ENCODE measurements at regions of chr10 and their contacts with region 1.

Region 1: GRCh38 chr10:90871766-90872647 is at the start of gene RPP30:
- DNase-seq: peak; percentile 71 to 83 (median 77)
- ATAC-seq: peak; percentile 99
- H3K4me3 ChIP-seq: peak within 1 kb of the TSS; percentile 83
- H3K4me3 Mint-ChIP-seq: peak within 1 kb of the TSS; percentile 94 to 99 (median 98)
- H3K27ac ChIP-seq: peak within 1 kb of the TSS; percentile 71
- H3K27ac Mint-ChIP-seq: peak within 1 kb of the TSS; percentile 73 to 95 (median 88)
- H3K4me1 ChIP-seq: peaks cover 14 to 23% of the 10 kb centered on the region in 2 donors
- H3K4me1 Mint-ChIP-seq: peaks cover 24 to 53% (median 37%) of the 10 kb centered on the region in 7 donors
- H3K27me3 ChIP-seq: no peaks in the 10 kb centered on the region
- H3K27me3 Mint-ChIP-seq: peaks cover 22 to 40% (median 34%) of the 10 kb centered on the region in 5 donors
- total RNA-seq, gene RPP30: 24.1 to 45.6 (median 38.0) TPM

Region 2: DNA sequence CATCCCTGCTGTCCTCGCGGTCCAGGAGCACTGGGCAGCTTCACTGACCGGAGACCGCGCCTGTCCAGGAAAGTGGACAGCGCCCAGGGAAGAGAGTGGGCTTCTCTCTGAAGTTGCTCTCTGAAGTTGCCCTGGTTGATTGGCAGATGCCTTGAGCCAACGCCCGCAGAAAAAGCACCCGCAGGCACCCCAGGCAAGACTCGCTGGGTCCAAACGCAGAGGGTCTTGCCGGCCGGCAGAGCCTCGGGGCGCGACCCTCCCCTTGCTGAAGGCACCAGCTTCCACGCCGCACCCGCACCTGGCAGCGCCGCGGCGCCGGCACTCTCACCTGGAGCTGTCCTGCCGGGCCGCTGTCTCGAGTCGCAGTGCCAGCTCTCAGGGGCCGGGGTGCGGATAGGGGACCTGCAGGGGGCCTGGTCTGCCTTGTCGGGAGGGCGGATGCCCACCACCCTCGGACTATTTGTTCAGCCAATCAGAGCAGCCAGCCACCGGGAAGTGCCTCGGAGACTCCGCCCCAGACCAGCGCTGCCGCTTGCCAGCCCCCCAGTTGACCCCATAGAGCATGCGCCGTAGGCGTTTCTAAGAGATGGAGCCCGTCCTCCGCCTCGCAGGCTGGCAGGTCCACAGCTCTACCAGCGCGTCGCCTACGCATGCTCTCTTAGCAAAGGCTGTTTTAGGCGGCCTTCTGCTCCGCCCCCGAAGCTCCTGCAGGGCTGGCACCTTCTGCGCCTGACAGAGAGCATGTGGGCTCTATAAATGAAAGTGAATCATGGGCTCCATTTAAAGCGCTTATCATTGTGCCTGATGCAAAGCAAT is 1620.4 kb before region 1 on chr10 and contains the start of gene LIPA:
- CTCF ChIA-PET with region 1: no interaction called
- POLR2A ChIA-PET with region 1: interaction called, 3 read pairs
- intact Hi-C with region 1: loop called in 1 of 2 experiments (anchors 10 kb)
- DNase-seq: peak; percentile 78 to 97 (median 94)
- ATAC-seq: peak; percentile 97
- H3K4me3 ChIP-seq: peak within 1 kb of the TSS; percentile 80
- H3K4me3 Mint-ChIP-seq: peak within 1 kb of the TSS; percentile 82 to 91 (median 90)
- H3K27ac ChIP-seq: peak within 1 kb of the TSS; percentile 76
- H3K27ac Mint-ChIP-seq: peak within 1 kb of the TSS; percentile 38 to 90 (median 84)
- H3K4me1 ChIP-seq: peaks cover 8 to 9% of the 10 kb centered on the region in 2 donors
- H3K4me1 Mint-ChIP-seq: peaks cover 17 to 32% (median 22%) of the 10 kb centered on the region in 7 donors
- H3K27me3 ChIP-seq: no peaks in the 10 kb centered on the region
- H3K27me3 Mint-ChIP-seq: peaks cover 0 to 9% (median 0%) of the 10 kb centered on the region in 5 donors
- total RNA-seq, gene LIPA: 19.9 to 49.9 (median 48.3) TPM

Region 3: GRCh38 chr10:89793649-89794254 is 1078.3 kb before region 1 on chr10:
- CTCF ChIA-PET with region 1: no interaction called
- POLR2A ChIA-PET with region 1: no interaction called
- intact Hi-C with region 1: loop called (anchors 2 kb)
- DNase-seq: peak in 7 of 9 donors; percentile 19 to 58 (median 42)
- ATAC-seq: peak; percentile 76
- H3K4me3 ChIP-seq: no peak overlapping the region
- H3K4me3 Mint-ChIP-seq: no peak overlapping the region
- H3K27ac ChIP-seq: no peak overlapping the region
- H3K27ac Mint-ChIP-seq: no peak overlapping the region
- H3K4me1 ChIP-seq: no peaks in the 10 kb centered on the region
- H3K4me1 Mint-ChIP-seq: peaks cover 0 to 7% (median 0%) of the 10 kb centered on the region in 7 donors
- H3K27me3 ChIP-seq: no peaks in the 10 kb centered on the region
- H3K27me3 Mint-ChIP-seq: peaks cover 4 to 17% (median 14%) of the 10 kb centered on the region in 5 donors

Region 4: GRCh38 chr10:90751107-90751997 is 120.7 kb before region 1 on chr10:
- CTCF ChIA-PET with region 1: interaction called, 4 read pairs
- POLR2A ChIA-PET with region 1: interaction called, 3 read pairs
- intact Hi-C with region 1: loop called (anchors 1 to 2 kb)
- DNase-seq: peak in 8 of 9 donors; percentile 10 to 38 (median 25)
- ATAC-seq: peak; percentile 54
- H3K4me3 ChIP-seq: no peak overlapping the region
- H3K4me3 Mint-ChIP-seq: no peak overlapping the region
- H3K27ac ChIP-seq: no peak overlapping the region
- H3K27ac Mint-ChIP-seq: no peak overlapping the region
- H3K4me1 ChIP-seq: no peaks in the 10 kb centered on the region
- H3K4me1 Mint-ChIP-seq: no peaks in the 10 kb centered on the region
- H3K27me3 ChIP-seq: no peaks in the 10 kb centered on the region
- H3K27me3 Mint-ChIP-seq: peaks cover 38 to 54% (median 48%) of the 10 kb centered on the region in 5 donors

Region 5: DNA sequence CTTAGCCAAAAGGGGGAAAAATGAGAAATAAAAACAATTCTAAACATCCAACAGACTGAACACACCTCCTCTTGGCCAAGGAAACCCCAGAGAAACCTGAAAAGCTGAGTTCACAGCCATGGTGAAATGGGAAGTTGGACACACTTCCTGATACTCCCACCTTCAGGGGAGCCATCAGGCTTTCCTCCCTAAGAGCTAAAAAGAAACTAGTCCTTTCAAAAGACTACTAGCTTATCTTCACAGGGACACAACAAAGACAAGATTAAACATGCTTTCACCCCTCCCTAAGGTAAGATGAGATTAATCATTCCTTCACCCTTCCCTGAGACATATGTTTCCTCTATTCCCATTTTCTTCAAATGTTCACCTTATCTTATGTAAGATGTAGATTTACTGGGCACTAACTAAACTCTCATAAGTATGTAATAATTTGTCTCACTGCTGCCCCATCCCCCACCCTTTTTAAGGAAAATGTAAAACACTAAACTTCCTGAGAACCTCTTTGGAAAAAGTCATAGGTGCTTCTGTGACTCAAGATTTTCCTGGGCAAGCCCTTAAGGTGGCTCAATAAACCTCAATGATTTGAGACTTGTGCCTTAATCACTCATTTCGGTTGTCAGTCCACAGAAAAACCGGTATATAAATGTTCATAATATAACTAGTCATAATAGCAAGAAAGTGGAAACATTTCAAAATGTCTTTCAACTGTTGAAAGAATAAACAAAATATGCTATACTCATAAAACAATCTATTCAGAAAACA is 54.7 kb before region 1 on chr10:
- CTCF ChIA-PET with region 1: no interaction called
- POLR2A ChIA-PET with region 1: no interaction called
- intact Hi-C with region 1: no loop called
- DNase-seq: no peak
- ATAC-seq: no peak
- H3K4me3 ChIP-seq: no peak overlapping the region
- H3K4me3 Mint-ChIP-seq: no peak overlapping the region
- H3K27ac ChIP-seq: no peak overlapping the region
- H3K27ac Mint-ChIP-seq: no peak overlapping the region
- H3K4me1 ChIP-seq: no peaks in the 10 kb centered on the region
- H3K4me1 Mint-ChIP-seq: no peaks in the 10 kb centered on the region
- H3K27me3 ChIP-seq: no peaks in the 10 kb centered on the region
- H3K27me3 Mint-ChIP-seq: peaks cover 4 to 22% (median 7%) of the 10 kb centered on the region in 5 donors

Region 6: DNA sequence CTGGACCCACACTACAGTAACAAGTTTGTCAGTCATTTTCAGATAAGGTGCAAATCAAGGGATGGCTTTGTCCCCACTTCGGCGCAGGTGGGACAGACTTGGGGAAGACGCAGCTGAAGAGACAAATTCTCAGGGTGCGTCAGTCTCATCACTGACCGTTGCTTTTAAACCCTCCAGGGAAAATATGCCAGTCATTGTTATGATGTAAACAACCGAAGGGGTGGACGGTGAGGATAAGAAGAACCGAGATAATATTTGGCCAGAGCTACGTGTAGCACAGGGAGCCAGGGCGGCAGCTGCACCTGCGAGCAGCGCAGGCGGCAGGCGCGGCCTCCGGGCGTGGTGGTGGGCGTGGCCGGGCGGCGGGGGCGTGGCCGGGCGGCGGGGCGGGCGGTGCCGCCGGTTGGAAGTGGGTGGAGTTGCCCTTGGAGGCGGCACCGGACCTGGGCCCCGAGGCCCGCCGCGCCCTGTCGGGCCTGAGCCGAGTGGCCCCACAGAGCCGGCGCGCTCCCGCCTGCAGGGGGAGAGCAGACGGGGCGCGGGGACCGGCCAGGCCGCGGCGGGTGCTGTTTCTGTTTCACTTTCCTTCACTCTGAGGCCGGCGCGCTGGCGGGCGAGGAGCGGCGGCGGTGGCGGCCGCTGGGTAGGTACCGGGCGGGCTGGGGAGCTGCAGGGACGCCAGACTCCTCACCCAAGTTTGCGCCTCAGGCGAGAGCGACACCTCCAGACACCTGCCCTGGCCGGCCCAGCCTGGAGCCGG is 348.4 kb after region 1 on chr10 and contains the start of gene PCGF5:
- CTCF ChIA-PET with region 1: no interaction called
- POLR2A ChIA-PET with region 1: no interaction called
- intact Hi-C with region 1: loop called (anchors 1 to 10 kb)
- DNase-seq: peak; percentile 82 to 98 (median 90)
- ATAC-seq: peak; percentile 98
- H3K4me3 ChIP-seq: peak within 1 kb of the TSS; percentile 68
- H3K4me3 Mint-ChIP-seq: peak within 1 kb of the TSS; percentile 84 to 96 (median 90)
- H3K27ac ChIP-seq: peak within 1 kb of the TSS; percentile 90
- H3K27ac Mint-ChIP-seq: peak within 1 kb of the TSS; percentile 76 to 95 (median 89)
- H3K4me1 ChIP-seq: peaks cover 28 to 34% of the 10 kb centered on the region in 2 donors
- H3K4me1 Mint-ChIP-seq: peaks cover 33 to 69% (median 55%) of the 10 kb centered on the region in 7 donors
- H3K27me3 ChIP-seq: no peaks in the 10 kb centered on the region
- H3K27me3 Mint-ChIP-seq: no peaks in the 10 kb centered on the region
- total RNA-seq, gene PCGF5: 41.2 to 62.3 (median 57.4) TPM

Region 7: GRCh38 chr10:91797874-91798648 is 926.1 kb after region 1 on chr10 and contains the start of gene TNKS2:
- CTCF ChIA-PET with region 1: no interaction called
- POLR2A ChIA-PET with region 1: no interaction called
- intact Hi-C with region 1: loop called (anchors 5 kb)
- DNase-seq: peak; percentile 86 to 97 (median 92)
- ATAC-seq: peak; percentile 87
- H3K4me3 ChIP-seq: peak within 1 kb of the TSS; percentile 87
- H3K4me3 Mint-ChIP-seq: peak within 1 kb of the TSS; percentile 95 to 100 (median 98)
- H3K27ac ChIP-seq: peak within 1 kb of the TSS; percentile 92
- H3K27ac Mint-ChIP-seq: peak within 1 kb of the TSS; percentile 92 to 100 (median 96)
- H3K4me1 ChIP-seq: peaks cover 26 to 37% of the 10 kb centered on the region in 2 donors
- H3K4me1 Mint-ChIP-seq: peaks cover 37 to 73% (median 69%) of the 10 kb centered on the region in 7 donors
- H3K27me3 ChIP-seq: no peaks in the 10 kb centered on the region
- H3K27me3 Mint-ChIP-seq: no peaks in the 10 kb centered on the region
- total RNA-seq, gene TNKS2: 35.0 to 57.3 (median 41.5) TPM

Region 8: GRCh38 chr10:92573798-92574547 is 1702.0 kb after region 1 on chr10 and contains the start of gene IDE:
- CTCF ChIA-PET with region 1: no interaction called
- POLR2A ChIA-PET with region 1: no interaction called
- intact Hi-C with region 1: loop called in 1 of 2 experiments (anchors 5 kb)
- DNase-seq: peak; percentile 70 to 89 (median 77)
- ATAC-seq: peak; percentile 88
- H3K4me3 ChIP-seq: peak within 1 kb of the TSS; percentile 90
- H3K4me3 Mint-ChIP-seq: peak within 1 kb of the TSS; percentile 78 to 94 (median 88)
- H3K27ac ChIP-seq: peak within 1 kb of the TSS; percentile 83
- H3K27ac Mint-ChIP-seq: peak within 1 kb of the TSS; percentile 78 to 95 (median 89)
- H3K4me1 ChIP-seq: peaks cover 12 to 14% of the 10 kb centered on the region in 2 donors
- H3K4me1 Mint-ChIP-seq: peaks cover 27 to 39% (median 38%) of the 10 kb centered on the region in 7 donors
- H3K27me3 ChIP-seq: no peaks in the 10 kb centered on the region
- H3K27me3 Mint-ChIP-seq: no peaks in the 10 kb centered on the region
- total RNA-seq, gene IDE: 20.7 to 36.7 (median 28.4) TPM